ENCODE measurements at regions of chr3 and their contacts with region 1.

Region 1: DNA sequence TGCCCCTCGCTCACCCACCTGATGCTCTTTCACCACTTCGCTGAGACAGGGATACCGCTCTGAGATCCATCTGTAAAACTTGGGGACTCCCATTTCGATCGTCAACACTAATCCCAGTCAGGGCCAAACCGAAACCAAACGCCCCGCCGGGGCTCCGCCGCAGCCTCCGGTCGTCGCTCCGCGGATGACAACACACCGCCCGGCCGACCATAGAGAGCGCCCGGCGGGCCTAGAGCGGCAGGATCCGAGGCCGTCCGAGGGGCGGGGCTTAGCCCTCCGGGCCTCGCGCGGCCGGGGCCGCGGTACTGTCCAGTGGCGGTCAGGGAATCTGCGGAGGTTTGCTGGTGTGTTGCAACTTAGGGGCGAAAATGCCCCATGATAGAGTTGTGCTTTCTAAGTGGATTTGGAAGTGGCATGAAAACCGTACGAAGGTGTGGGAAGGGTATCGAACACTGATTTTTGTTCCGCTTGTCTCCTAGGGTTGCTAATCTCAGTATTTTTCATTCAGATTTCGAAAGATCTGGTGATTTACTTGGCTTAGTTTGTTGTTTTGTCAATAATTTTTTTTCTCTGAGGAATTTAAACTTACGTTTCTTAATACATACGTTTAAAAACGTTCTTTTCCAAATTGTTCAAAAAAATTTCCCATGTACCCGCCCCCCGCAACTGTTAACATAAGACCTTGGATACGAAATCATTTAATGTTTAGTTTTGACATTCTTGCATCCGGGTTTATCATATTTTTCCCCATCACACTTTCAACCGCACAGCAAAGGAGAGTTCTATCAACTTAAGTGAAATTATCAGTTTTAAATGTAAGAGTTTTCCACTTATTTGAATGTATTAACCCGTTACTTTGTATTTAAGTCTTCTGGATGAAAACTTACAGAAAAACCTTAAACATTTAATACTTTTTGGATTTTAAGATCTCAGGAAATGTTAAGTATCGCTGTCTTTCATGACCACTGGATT is at the start of gene XRN1:
- DNase-seq: peak; percentile 81 to 98
- H3K4me3 ChIP-seq: peak within 1 kb of the TSS; percentile 80
- H3K27ac ChIP-seq: peak within 1 kb of the TSS; percentile 69
- H3K4me1 ChIP-seq: peaks cover 20% of the 10 kb centered on the region
- H3K27me3 ChIP-seq: no peaks in the 10 kb centered on the region
- CTCF ChIP-seq: no peak
- total RNA-seq, gene XRN1: 45.3 and 47.0 TPM in 2 replicates

Region 2: DNA sequence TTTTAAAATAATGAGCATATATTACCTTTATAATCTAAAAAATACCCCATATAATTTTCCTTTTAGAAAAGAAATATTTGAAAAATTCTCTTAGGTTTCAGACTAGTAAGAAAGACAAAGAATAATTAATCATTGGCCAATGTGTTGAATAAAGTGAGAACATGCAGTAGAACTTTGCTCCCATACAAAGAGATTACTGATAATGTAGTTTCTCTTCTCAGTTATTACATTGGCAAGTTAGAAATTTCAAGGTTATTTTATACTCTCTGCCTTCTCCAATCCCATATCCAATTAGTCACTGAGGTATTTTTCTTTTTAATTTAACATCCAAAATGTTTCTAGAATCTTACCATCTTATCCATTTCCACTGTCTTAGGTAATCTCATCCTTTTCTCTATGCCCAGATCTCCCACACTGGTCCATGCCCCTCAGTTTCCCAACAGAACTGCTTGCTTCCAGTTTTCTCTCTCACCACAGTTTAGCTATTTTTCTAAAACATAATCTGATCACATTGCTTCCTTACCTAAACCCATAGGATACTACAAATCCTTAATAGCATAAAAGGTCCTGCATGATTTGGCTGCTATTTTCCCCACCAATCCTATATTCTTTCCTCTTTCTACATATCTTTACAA is 11.1 kb before region 1 on chr3:
- CTCF ChIA-PET with region 1: no interaction called
- POLR2A ChIA-PET with region 1: no interaction called
- intact Hi-C with region 1: loop called (anchors 1 kb)
- DNase-seq: no peak
- H3K4me3 ChIP-seq: no peak overlapping the region
- H3K27ac ChIP-seq: no peak overlapping the region
- H3K4me1 ChIP-seq: peaks cover 35% of the 10 kb centered on the region
- H3K27me3 ChIP-seq: no peaks in the 10 kb centered on the region
- CTCF ChIP-seq: no peak

Region 3: DNA sequence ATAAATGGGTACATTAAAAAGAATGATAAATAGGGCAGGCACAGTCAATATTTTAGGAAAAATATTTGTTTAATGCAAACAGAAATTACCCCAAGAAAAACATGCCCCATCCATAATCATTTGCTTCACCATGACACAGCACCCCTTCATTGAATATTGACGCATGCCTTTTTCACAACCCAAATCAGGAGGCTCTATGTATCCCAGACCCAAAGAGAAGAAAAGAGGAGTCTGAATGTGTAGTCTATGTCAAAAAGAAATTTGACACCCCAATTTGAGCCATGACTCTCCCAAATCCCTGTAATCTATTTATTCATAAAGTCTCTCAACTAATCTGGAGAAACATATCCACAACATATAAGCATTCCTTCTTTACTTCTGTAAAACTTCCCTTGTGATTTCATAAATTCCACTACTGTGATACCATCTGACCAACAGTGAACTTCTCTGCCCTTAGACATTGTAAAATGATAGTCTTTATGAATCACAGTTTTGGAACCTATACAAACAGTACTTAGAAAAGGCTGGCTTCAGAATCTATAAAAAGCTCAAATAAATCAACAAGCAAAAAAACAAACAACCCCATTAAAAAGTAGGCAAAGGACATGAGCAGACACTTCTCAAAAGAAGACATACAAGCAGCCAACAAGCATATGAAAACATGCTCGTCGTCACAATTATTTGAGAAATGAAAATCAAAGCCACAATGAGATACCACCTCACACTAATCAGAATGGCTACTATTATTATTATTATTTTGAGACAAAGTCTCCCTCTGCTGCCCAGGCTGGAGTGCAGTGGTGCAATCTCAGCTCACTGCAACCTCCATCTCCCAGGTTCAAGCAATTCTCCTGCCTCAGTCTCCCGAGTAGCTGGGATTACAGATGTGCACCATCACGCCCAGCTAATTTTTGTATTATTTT is 53.1 kb after region 1 on chr3:
- CTCF ChIA-PET with region 1: no interaction called
- POLR2A ChIA-PET with region 1: no interaction called
- intact Hi-C with region 1: loop called (anchors 2 kb)
- DNase-seq: peak in 1 of 2 experiments; percentile 88
- H3K4me3 ChIP-seq: no peak overlapping the region
- H3K27ac ChIP-seq: peak overlapping the region; percentile 57
- H3K4me1 ChIP-seq: peaks cover 22% of the 10 kb centered on the region
- H3K27me3 ChIP-seq: no peaks in the 10 kb centered on the region
- CTCF ChIP-seq: no peak

Region 4: DNA sequence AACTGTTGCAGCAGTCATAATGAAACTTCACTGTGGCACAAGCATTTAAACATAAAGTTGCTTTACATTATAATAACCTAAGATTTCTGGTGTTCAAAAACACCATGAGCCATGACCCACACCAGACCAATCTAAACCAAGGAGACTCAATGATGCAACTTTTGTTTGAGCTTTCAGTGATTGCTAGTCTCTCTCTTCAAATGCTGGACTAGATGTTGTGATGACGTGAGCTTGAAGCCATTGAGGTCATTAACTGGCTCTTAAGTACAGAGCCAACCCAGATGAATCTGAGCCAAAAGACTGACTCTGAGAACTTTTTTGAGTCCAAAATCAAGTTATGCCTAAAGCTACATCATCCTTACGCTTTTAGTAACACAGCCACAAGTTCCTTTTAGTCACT is 93.9 kb after region 1 on chr3:
- CTCF ChIA-PET with region 1: no interaction called
- POLR2A ChIA-PET with region 1: interaction called, 10 read pairs
- intact Hi-C with region 1: no loop called
- DNase-seq: no peak
- H3K4me3 ChIP-seq: no peak overlapping the region
- H3K27ac ChIP-seq: 0 out of 2 replicates have a peak overlapping the region, but pooled peaks have one; percentile 1
- H3K4me1 ChIP-seq: no peaks in the 10 kb centered on the region
- H3K27me3 ChIP-seq: no peaks in the 10 kb centered on the region
- CTCF ChIP-seq: no peak

Region 5: DNA sequence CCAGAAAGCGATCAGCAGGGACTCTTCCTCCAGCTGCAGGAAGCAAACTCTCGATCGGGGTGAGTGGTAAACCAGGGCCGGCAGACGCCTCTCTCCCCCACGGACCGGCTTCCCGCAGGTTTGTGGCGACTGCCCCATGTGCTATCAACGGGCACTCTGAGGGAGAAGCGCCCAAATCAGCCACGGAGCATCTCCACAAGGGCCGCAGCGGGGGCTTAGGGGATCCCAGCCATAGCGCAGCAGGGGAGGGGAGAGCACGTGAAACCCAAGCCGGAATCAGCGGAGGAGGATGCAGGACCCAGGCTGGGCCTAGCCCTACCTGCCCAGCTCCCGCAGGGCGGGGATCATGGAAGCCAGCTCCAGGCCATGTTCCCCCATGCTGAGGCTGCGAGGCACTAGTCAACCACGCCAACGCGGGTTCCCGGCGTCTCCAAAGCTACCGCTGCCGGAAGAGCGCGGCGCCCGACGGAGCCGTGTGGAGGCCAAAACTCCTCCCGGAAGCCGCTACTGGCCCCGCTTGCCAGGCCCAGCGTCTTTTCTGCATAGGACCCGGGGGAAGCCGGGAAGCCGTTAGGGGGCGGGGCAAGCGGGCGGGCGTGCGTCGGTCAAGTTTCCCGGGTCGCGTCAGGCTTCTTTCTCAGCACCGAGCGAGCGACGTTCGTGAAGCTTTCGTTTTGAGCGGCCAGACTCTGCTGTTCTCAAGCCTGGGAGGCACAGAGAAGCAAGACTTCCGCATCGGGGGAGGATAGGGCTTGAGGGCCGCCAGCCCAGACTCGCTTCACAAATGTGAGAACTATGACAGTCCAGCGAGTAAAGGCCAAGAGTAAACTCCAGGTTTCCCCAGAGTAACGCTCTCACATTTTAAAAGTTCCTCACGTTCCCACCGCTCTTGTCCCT is 130.4 kb after region 1 on chr3 and contains the start of gene ATR:
- CTCF ChIA-PET with region 1: no interaction called
- POLR2A ChIA-PET with region 1: interaction called, 4 read pairs
- intact Hi-C with region 1: loop called (anchors 10 kb)
- DNase-seq: peak; percentile 89 to 98
- H3K4me3 ChIP-seq: peak within 1 kb of the TSS; percentile 98
- H3K27ac ChIP-seq: peak within 1 kb of the TSS; percentile 81
- H3K4me1 ChIP-seq: peaks cover 28% of the 10 kb centered on the region
- H3K27me3 ChIP-seq: no peaks in the 10 kb centered on the region
- CTCF ChIP-seq: no peak
- total RNA-seq, gene ATR: 28.3 and 33.3 TPM in 2 replicates

Measured in PC-9 (cell line).